ENCODE measurements at regions of chrX and their contacts with region 1.

Region 1: DNA sequence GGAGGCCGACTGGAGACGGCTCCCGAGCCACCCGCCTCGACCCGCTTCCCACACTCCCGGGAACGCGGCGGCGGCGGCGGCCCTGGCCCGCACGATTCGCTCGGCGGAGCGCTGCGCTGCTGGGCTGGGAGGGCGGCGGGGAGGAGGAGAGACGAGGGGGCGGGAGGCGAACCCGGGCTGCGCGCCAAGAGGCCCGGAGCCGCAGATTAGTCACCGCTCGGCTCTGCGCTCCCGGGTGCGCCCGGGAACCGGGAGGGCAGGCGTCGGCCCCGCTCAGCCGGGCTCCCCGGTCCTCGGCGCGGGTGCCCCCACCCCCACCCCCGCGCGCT is 11.2 kb upstream of the BCOR start:
- DNase-seq: peak in 1 of 2 experiments; percentile 66
- H3K4me3 ChIP-seq: peak overlapping the region; percentile 54; the same call in 1 of the 2 replicates
- H3K27ac ChIP-seq: peak overlapping the region; percentile 54; the same call in 1 of the 2 replicates
- H3K4me1 ChIP-seq: no peaks in the 10 kb centered on the region
- H3K27me3 ChIP-seq: no peaks in the 10 kb centered on the region
- CTCF ChIP-seq: no peak

Region 2: DNA sequence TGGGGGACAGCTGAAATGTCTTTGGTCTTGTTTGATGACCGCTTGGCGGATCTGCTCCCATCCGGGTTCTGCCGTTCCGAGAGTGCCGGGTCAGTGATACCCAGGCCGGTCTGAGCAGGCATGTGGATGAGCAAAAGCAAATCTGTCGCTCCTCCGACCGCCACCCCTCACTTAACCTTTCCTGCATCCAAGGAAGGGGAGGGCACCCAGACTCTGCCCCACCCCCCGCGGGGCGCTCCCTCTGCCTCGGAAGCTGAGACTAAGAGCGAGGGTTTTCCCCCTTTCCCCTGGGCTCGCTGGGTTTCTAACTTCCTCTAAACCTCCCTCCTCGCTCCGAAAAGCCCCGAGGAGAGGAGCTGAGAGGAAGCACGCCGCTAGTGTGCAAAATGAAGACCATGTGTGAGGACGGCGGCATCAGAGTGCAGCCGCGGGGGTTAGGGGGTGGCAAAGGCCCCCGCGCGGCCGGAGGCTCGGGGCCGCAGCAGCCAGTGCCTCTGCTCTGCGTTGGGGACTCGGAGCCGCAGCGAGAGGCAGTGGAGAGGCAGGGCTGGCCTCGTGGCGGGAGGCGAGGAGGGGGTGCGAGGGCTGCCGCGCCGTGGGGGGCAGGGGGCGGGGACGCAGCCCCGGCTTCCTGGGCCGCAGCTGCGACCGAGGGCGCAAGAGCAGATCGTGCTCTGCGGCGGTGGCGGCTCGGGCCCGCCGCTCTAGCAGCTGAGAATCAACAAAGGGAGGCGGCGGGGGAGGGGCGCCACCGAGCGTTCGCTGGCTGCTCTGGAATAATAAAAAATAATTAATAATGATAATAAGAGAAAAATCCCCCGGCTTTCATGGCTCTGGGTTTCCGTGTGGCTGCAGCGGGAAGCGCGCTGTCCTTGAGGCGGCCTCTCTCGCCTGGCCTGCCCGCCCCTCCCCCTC is 44.7 kb after region 1 on chrX:
- CTCF ChIA-PET with region 1: no interaction called
- POLR2A ChIA-PET with region 1: interaction called, 4 read pairs
- intact Hi-C with region 1: loop called (anchors 5 kb)
- DNase-seq: no peak
- H3K4me3 ChIP-seq: peak overlapping the region; percentile 51; the same call in 1 of the 2 replicates
- H3K27ac ChIP-seq: 0 out of 2 replicates have a peak overlapping the region, but pooled peaks have one; percentile 23
- H3K4me1 ChIP-seq: no peaks in the 10 kb centered on the region
- H3K27me3 ChIP-seq: no peaks in the 10 kb centered on the region
- CTCF ChIP-seq: no peak

Measured in PC-9 (cell line).